ENCODE measurements at regions of chr2 and their contacts with region 1.

Region 1: GRCh38 chr2:46296840-46297545 is at the start of gene EPAS1:
- DNase-seq: peak; percentile 98
- ATAC-seq: peak; percentile 90
- total RNA-seq, gene EPAS1: 205 TPM

Region 2: DNA sequence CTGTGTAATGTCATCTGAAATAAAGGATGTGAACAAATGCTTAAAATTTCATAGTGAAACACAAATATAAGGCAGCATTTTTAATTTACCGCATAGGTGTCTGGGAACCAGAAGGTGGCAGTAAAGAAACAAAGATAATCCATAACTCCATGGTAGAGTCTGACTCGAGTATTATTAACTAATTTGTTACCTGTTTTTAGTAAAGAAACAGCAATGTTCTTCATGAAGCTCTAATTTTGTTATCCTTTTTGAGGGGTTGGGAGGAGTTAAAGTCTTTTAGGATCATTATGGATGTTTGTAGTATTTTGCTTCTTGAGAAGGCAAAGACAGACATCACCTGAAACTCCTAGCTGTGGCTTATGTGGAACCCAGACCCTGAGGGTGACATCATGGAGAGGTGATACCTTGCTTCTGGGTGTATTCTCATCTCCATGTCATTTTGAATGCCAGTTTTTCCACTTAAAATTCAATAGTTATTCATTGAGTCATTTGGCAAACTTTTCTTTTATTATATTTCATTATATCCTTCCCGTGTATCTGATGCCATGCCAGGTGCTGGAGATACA is 286.0 kb before region 1 on chr2:
- intact Hi-C with region 1: loop called (anchors 5 kb)
- DNase-seq: no peak
- ATAC-seq: no peak

Region 3: GRCh38 chr2:46134531-46135181 is 162.3 kb before region 1 on chr2:
- intact Hi-C with region 1: loop called (anchors 5 kb)
- DNase-seq: no peak
- ATAC-seq: peak; percentile 76

Region 4: DNA sequence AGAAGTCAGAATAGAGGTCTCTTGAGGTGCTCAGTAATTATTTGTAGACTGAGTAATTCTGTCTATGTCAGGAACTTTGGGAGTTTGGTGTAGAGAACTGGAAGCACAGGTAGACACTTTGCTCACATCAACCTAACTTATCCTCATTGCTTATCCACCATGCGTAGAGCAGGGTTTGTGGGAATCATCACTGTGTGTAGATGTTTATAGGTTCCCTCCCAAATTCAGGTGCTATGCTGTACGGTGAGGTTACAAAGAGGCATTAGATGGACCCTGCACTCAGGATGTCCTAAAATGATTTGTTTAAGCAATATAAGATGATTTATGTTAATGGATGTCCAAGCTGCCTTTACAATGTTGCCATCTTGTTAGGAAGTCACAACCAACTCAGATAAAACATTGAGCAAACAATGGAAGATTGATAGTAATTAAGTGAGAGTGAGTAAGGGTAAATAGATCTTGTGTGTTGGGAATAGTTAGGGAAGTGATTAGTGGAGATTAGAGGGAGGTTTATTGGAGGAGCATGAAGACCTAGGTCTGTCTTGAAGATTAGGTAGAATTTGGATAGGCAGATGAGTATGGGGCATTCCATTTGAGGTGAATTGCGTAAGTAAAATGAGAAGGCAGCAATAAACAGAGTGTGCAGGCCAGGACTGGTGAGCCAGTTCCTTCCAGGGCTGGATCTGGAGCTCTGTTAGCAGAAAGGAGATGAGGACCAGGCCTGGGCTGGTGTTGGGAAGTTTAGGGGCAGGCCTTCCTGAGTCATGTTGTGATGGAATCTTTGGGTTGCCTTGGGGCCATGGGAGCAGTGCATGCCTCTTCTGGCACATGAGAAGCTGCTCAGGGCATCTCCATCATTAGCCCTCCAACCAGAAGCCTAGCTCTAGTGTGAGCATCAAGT is 12.3 kb after region 1 on chr2:
- intact Hi-C with region 1: no loop called
- DNase-seq: no peak
- ATAC-seq: no peak

Region 5: GRCh38 chr2:46335391-46336282 is 38.6 kb after region 1 on chr2:
- intact Hi-C with region 1: loop called (anchors 5 kb)
- DNase-seq: no peak
- ATAC-seq: peak; percentile 21

Region 6: GRCh38 chr2:46364797-46365457 is 67.9 kb after region 1 on chr2:
- intact Hi-C with region 1: loop called (anchors 1 kb)
- DNase-seq: no peak
- ATAC-seq: peak; percentile 45